ENCODE measurements at regions of chr14 and their contacts with region 1.

Region 1: GRCh38 chr14:65164068-65164824 is 61.9 kb upstream of the MAX start:
- DNase-seq: no peak
- ATAC-seq: peak; percentile 56
- H3K4me3 ChIP-seq: no peak overlapping the region
- H3K27ac ChIP-seq: no peak overlapping the region
- H3K4me1 ChIP-seq: peaks cover 29% of the 10 kb centered on the region
- H3K27me3 ChIP-seq: no peaks in the 10 kb centered on the region
- CTCF ChIP-seq: peak; percentile 51 to 77 (median 62); a peak in 5 of 6 replicates
- EP300 ChIP-seq: no peak
- POLR2A ChIP-seq: no peak
- RAD21 ChIP-seq: peak; percentile 96

Region 2: DNA sequence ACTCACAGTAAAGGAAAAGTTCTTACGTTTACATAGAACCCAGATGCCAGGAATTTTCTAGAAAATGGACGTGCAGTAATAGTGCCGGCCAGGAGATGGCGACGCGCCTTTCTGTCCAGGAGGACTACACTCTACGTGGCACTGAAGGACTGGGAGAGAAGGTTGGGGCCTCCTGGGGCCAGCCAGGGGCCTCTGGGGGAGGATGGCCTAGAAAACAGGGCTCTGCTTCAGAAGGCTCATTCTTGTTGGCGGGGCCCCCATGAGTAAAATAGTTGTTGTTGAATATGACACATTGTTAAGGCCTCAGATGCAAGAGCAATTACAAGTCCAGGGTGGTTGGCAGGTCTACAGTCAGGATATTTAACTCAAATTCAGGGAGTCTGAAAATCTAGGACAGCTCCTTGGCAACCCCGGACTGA is 58.2 kb after region 1 on chr14:
- CTCF ChIA-PET with region 1: interaction called, 13 read pairs
- POLR2A ChIA-PET with region 1: interaction called, 5 read pairs
- RAD21 ChIA-PET with region 1: interaction called, 10 read pairs
- SMC1A ChIA-PET with region 1: interaction called, 18 read pairs
- in situ Hi-C with region 1: no loop called
- intact Hi-C with region 1: loop called (anchors 2 kb)
- DNase-seq: no peak
- ATAC-seq: peak; percentile 86
- H3K4me3 ChIP-seq: no peak overlapping the region
- H3K27ac ChIP-seq: peak overlapping the region; percentile 20; the same call in 1 of the 2 replicates
- H3K4me1 ChIP-seq: peaks cover 31% of the 10 kb centered on the region
- H3K27me3 ChIP-seq: no peaks in the 10 kb centered on the region
- CTCF ChIP-seq: peak; percentile 84 to 91 (median 84)
- EP300 ChIP-seq: no peak
- POLR2A ChIP-seq: no peak
- RAD21 ChIP-seq: peak; percentile 95

Region 3: DNA sequence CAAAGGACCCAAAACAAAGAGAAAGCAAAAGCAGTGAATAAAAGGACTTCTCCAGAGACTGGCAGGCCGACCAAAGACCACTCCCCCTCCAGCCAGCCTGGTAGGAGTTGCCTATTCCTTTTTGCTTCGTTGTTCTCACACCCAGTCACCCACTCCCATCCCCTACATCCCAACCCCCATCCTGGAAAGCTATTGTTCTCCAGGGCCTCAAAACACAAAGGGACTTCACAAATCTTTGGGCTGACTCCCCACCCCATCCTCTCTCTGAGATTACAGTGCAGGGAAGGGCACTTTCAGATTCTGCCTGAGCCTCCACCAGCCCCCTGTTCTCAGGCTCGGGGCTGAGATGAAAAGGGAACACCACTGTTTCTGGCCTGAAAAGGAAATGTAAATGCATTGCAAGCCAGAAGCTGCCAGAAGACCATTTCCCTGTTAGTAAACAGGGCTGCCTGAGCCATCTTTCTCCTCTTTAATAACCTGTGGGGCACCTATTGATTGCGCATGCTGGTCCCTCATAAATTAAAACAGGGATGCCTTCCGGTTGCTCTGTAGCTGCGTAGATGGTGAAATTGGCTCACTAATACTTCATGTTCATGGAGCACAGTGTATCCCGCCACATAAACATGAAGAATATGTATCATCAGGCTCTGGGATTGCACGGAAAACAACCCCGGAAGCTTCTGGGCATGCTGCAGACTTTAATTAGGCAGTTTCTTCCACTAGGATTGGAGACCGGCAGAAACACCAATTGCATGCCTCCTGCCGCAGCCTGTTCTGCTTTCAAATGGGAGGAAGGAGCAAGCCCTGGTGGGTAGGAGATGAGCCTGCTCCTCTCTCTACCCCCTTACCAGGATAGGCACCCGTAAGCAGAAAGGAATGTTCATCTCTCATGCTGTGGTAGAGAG is 118.0 kb after region 1 on chr14:
- CTCF ChIA-PET with region 1: interaction called, 8 read pairs
- POLR2A ChIA-PET with region 1: interaction called, 3 read pairs
- RAD21 ChIA-PET with region 1: interaction called, 8 read pairs
- SMC1A ChIA-PET with region 1: interaction called, 4 read pairs
- in situ Hi-C with region 1: loop called (anchors 10 kb)
- intact Hi-C with region 1: loop called (anchors 2 kb)
- DNase-seq: no peak
- ATAC-seq: peak; percentile 55
- H3K4me3 ChIP-seq: peak overlapping the region; percentile 66
- H3K27ac ChIP-seq: peak overlapping the region; percentile 89
- H3K4me1 ChIP-seq: peaks cover 43% of the 10 kb centered on the region
- H3K27me3 ChIP-seq: no peaks in the 10 kb centered on the region
- CTCF ChIP-seq: no peak
- EP300 ChIP-seq: no peak
- POLR2A ChIP-seq: 0 out of 2 replicates have a peak, but pooled peaks have one; percentile 8
- RAD21 ChIP-seq: no peak

Region 4: GRCh38 chr14:65604936-65605335 is 440.7 kb after region 1 on chr14:
- CTCF ChIA-PET with region 1: no interaction called
- POLR2A ChIA-PET with region 1: interaction called, 5 read pairs
- RAD21 ChIA-PET with region 1: interaction called, 4 read pairs
- SMC1A ChIA-PET with region 1: interaction called, 10 read pairs
- in situ Hi-C with region 1: no loop called
- intact Hi-C with region 1: loop called (anchors 5 kb)
- DNase-seq: no peak
- ATAC-seq: no peak
- H3K4me3 ChIP-seq: no peak overlapping the region
- H3K27ac ChIP-seq: no peak overlapping the region
- H3K4me1 ChIP-seq: no peaks in the 10 kb centered on the region
- H3K27me3 ChIP-seq: no peaks in the 10 kb centered on the region
- CTCF ChIP-seq: peak in 2 of 3 experiments; percentile 21 to 56; a peak in 2 of 6 replicates
- EP300 ChIP-seq: no peak
- POLR2A ChIP-seq: no peak
- RAD21 ChIP-seq: no peak

Region 5: DNA sequence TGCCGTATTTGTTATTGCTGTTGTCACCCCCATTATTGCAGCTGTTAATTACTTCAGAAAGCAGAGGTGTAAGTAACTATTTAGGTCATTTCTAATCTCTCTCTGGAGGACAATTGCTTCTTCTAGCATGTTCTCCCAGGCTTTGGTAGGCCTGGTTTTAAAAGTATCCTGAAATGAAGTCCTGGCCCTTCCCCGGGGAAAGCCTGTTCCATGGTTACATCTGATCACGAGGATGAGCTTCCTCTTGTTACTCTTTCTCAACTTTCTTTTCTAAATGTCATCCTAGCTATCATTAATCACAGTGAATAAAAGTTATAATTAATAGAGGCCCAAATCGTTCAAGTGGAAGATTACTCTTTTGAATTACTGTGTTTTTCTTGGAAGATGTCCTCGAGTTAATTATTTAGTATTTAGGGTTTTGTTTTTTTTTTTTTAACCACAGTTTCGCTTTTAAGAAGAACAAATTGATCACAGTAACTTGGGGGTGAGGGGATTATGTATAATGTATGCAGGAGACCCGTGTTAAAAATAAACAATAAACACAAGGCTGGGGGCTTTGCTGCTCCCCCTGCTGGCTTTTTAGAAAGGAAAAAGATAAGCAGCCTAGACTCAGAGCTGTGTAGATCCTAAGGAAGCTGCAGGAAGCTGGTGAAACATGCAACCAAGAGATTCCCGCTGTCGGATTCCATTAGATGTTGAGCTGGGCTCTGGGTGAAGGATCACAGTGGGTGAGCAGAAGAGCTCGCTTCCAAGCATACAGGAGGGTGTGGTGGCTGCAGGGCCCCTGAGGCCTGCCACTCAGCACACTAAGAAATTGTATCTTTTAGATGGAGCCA is 668.4 kb after region 1 on chr14:
- CTCF ChIA-PET with region 1: interaction called, 15 read pairs
- POLR2A ChIA-PET with region 1: no interaction called
- RAD21 ChIA-PET with region 1: interaction called, 5 read pairs
- SMC1A ChIA-PET with region 1: interaction called, 6 read pairs
- in situ Hi-C with region 1: no loop called
- intact Hi-C with region 1: no loop called
- DNase-seq: no peak
- ATAC-seq: no peak
- H3K4me3 ChIP-seq: no peak overlapping the region
- H3K27ac ChIP-seq: no peak overlapping the region
- H3K4me1 ChIP-seq: no peaks in the 10 kb centered on the region
- H3K27me3 ChIP-seq: peaks cover 1 to 4% of the 10 kb centered on the region in 2 experiments; a peak in 2 of 4 replicates
- CTCF ChIP-seq: peak; percentile 10 to 15 (median 15); a peak in 2 of 6 replicates
- EP300 ChIP-seq: no peak
- POLR2A ChIP-seq: no peak
- RAD21 ChIP-seq: 0 out of 2 replicates have a peak, but pooled peaks have one; percentile 5

Region 6: GRCh38 chr14:65958664-65959562 is 794.7 kb after region 1 on chr14:
- CTCF ChIA-PET with region 1: interaction called, 59 read pairs
- POLR2A ChIA-PET with region 1: no interaction called
- RAD21 ChIA-PET with region 1: interaction called, 32 read pairs
- SMC1A ChIA-PET with region 1: interaction called, 16 read pairs
- in situ Hi-C with region 1: loop called (anchors 5 kb)
- intact Hi-C with region 1: loop called (anchors 1 kb)
- DNase-seq: no peak
- ATAC-seq: peak; percentile 82
- H3K4me3 ChIP-seq: no peak overlapping the region
- H3K27ac ChIP-seq: no peak overlapping the region
- H3K4me1 ChIP-seq: no peaks in the 10 kb centered on the region
- H3K27me3 ChIP-seq: peaks cover 2 to 4% of the 10 kb centered on the region in 2 experiments; a peak in 2 of 4 replicates
- CTCF ChIP-seq: peak; percentile 22 to 55 (median 42); a peak in 4 of 6 replicates
- EP300 ChIP-seq: no peak
- POLR2A ChIP-seq: no peak
- RAD21 ChIP-seq: peak; percentile 57

Region 7: DNA sequence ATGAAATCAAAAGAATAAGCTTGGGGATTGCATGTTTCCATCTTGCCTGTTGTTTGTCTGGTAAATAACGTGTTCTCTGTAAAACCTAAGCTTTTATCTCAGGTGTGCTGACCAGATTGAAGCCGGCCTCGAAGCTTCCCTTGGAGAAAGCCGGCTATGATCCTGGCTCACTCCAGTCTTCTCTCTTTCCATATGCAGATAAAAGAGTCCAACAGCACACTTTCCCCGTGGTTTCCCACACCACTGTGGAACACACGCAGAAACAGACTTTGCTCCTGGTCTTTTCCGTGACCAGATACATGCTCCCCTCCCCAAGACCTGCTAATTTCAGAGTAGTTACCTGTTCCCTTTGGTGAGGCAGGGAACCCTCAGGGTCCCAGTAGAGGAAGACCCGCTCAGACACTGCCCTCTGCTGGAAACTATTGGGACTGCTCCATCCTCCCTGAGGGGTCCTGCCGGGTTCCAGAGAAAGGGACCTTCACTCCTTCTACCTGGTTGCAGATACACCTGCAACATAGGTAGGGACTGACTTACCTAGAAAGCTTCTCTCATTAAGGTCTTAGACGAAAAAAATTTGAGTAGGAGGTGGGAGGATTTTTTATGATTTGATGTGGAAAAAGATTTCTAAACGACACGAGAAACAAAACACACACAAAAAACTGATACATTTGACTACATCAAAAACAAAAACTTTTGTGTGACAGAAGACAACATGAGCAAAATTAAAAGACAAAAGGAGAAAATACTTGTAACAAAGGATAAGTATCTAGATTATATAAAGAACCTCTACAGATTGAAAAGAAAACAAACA is 906.5 kb after region 1 on chr14:
- CTCF ChIA-PET with region 1: interaction called, 27 read pairs
- POLR2A ChIA-PET with region 1: no interaction called
- RAD21 ChIA-PET with region 1: interaction called, 4 read pairs
- SMC1A ChIA-PET with region 1: interaction called, 11 read pairs
- in situ Hi-C with region 1: loop called (anchors 5 kb)
- intact Hi-C with region 1: loop called (anchors 2 kb)
- DNase-seq: no peak
- ATAC-seq: peak; percentile 85
- H3K4me3 ChIP-seq: no peak overlapping the region
- H3K27ac ChIP-seq: no peak overlapping the region
- H3K4me1 ChIP-seq: no peaks in the 10 kb centered on the region
- H3K27me3 ChIP-seq: no peaks in the 10 kb centered on the region; a peak in 1 of 4 replicates
- CTCF ChIP-seq: peak; percentile 72 to 87 (median 82)
- EP300 ChIP-seq: no peak
- POLR2A ChIP-seq: no peak
- RAD21 ChIP-seq: peak; percentile 84